Activated CD4-positive, alpha-beta T cell treated with anti-CD3 and anti-CD28 coated beads, Interleukin-2, amount 10 ng/mL, durations not matched to agents 24 days and 14 days (primary cell): ENCODE measurements at regions of chr1 and their contacts with region 1.

Region 1: GRCh38 chr1:92886886-92887419 is 55.1 kb downstream of the RPL5 start:
- DNase-seq: no peak
- H3K4me3 Mint-ChIP-seq: no peak overlapping the region
- H3K27ac Mint-ChIP-seq: no peak overlapping the region
- H3K4me1 Mint-ChIP-seq: peaks cover 13% of the 10 kb centered on the region
- H3K27me3 Mint-ChIP-seq: no peaks in the 10 kb centered on the region

Region 2: DNA sequence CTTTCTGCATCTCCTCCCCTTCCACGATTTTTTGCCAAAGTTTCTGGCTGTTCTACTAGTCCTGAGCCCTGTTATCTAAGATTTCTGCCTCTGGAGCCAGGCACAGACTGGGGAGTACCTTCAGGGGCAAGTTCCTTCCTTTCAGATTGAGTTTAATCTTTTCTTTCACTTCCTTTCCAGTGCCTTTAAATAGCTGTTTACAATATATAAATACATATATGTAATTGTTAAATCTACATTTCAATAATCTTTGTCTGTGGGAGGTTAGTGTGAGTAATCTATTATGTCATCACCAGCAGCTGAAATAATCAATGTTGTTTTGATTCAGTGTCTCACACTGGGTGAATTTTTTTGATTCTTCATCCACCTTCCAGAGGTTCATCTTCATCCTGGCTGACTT is 42.5 kb after region 1 on chr1:
- intact Hi-C with region 1: loop called (anchors 5 kb)
- DNase-seq: no peak
- H3K4me3 Mint-ChIP-seq: no peak overlapping the region
- H3K27ac Mint-ChIP-seq: peak overlapping the region; percentile 7
- H3K4me1 Mint-ChIP-seq: peaks cover 24% of the 10 kb centered on the region
- H3K27me3 Mint-ChIP-seq: no peaks in the 10 kb centered on the region

Region 3: GRCh38 chr1:92944901-92945747 is 58.2 kb after region 1 on chr1:
- intact Hi-C with region 1: loop called (anchors 5 kb)
- DNase-seq: peak; percentile 43
- H3K4me3 Mint-ChIP-seq: no peak overlapping the region
- H3K27ac Mint-ChIP-seq: no peak overlapping the region
- H3K4me1 Mint-ChIP-seq: peaks cover 49% of the 10 kb centered on the region
- H3K27me3 Mint-ChIP-seq: no peaks in the 10 kb centered on the region